Heart left ventricle (tissue), 16 donors: ENCODE measurements at regions of chr3 and their contacts with region 1.

Region 1: DNA sequence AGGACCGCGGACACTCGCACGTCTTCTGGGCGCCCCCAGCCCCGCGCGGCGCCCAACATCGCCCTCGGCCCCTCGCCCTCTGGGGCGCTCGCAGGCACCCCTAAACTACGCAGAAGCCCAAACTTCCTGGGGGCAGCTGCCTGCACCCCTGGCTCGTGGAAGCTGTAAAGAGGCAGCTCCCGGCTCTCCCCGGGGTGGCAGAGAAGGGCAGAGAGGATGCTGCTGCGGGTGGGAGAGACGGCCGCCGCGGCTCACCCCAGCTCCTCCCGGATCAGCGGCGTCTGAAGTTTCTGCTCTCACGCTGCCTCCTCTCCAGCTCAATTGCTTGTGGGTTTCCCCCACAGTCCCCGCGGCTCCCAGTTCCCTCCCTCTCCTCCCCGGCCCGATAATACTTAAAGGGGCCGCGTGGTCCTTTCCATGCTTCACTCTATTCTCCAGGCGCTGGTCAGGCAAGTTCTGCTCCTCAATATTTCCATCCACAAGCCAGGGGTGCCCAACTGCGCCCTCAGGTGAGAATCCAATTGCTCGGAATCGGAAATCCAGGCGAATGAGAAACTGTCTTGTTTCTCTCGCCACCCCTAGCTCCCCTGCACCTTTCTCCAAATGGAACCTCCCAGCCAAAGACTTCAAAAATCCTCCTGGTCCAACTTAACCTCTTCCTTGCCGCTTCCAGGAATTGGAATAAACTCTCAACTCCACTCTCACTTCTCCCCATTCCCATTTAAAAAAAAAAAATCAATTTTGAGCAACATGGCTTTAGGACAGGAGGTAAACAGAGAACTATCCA is 748.5 kb downstream of the ROBO1 start:
- DNase-seq: peak; percentile 77 to 79 (median 78)
- ATAC-seq: peak; percentile 72 to 94 (median 92)
- H3K4me3 ChIP-seq: peak overlapping the region; percentile 50 to 87 (median 74)
- H3K27ac ChIP-seq: peak overlapping the region; percentile 63 to 92 (median 80)
- H3K4me1 ChIP-seq: peaks cover 0 to 24% (median 0%) of the 10 kb centered on the region in 12 donors
- H3K27me3 ChIP-seq: peaks cover 0 to 29% (median 5%) of the 10 kb centered on the region in 9 donors
- CTCF ChIP-seq: no peak
- POLR2A ChIP-seq: peak in 1 of 2 donors; percentile 45

Region 2: DNA sequence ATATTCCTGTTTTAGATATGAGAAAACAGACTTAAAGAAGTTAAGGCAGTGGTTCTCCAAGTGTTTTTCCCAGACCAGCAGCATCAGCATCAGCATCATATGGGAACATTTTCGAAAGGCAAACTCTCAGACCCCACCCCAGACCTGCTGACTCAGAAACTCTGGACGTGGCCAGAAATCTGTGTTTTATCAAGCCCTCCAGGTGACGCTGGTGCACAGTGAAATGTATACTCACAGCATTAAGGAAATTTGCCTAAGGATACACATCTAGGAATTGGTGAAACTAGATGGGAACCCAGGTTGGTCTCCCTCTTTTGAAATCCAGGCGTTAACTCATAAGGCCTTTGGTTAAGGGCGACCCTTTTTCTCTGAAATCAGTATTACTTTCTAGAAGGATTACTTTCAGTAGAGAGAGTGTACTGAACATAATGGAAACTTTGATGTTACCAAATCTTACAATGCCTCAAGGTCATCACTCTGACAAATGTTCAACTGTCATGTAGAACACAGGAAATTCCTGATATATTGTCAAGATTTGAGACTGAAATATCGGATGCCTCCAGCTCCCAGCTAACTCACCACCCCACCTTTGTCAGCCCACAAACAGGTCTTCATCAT is 161.7 kb before region 1 on chr3:
- intact Hi-C with region 1: loop called in 1 of 10 experiments (anchors 10 kb)
- DNase-seq: no peak
- ATAC-seq: no peak
- H3K4me3 ChIP-seq: no peak overlapping the region
- H3K27ac ChIP-seq: no peak overlapping the region
- H3K4me1 ChIP-seq: peaks cover 0 to 4% (median 0%) of the 10 kb centered on the region in 12 donors
- H3K27me3 ChIP-seq: no peaks in the 10 kb centered on the region
- CTCF ChIP-seq: no peak
- POLR2A ChIP-seq: no peak

Region 3: DNA sequence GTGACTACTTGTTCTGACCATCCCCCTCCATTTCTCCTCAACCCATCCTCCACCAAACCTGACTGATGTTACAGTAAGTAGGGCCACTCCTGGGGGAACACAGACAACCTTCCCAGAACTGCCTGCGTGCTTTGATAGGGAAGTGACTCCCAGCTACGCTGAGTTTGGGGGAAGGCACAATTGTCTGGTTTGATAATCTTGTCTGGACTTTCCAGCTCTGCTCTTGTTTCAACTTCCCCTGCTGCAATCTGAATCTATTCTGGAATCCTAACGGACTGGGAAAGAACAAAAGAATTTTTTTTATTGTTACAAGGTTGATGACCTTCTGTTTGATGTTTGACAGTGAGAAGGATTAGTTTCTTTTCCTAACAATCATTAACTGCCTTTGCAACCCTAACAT is 147.1 kb before region 1 on chr3:
- intact Hi-C with region 1: loop called in 1 of 10 experiments (anchors 10 kb)
- DNase-seq: peak in 1 of 5 donors; percentile 19
- ATAC-seq: peak in 3 of 4 donors; percentile 53 to 59 (median 55)
- H3K4me3 ChIP-seq: no peak overlapping the region
- H3K27ac ChIP-seq: no peak overlapping the region
- H3K4me1 ChIP-seq: peaks cover 0 to 13% (median 0%) of the 10 kb centered on the region in 12 donors
- H3K27me3 ChIP-seq: no peaks in the 10 kb centered on the region
- CTCF ChIP-seq: no peak
- POLR2A ChIP-seq: no peak